Right ventricle myocardium inferior (tissue), 1 donor: ENCODE measurements at regions of chr11 and their contacts with region 1.

Region 1: DNA sequence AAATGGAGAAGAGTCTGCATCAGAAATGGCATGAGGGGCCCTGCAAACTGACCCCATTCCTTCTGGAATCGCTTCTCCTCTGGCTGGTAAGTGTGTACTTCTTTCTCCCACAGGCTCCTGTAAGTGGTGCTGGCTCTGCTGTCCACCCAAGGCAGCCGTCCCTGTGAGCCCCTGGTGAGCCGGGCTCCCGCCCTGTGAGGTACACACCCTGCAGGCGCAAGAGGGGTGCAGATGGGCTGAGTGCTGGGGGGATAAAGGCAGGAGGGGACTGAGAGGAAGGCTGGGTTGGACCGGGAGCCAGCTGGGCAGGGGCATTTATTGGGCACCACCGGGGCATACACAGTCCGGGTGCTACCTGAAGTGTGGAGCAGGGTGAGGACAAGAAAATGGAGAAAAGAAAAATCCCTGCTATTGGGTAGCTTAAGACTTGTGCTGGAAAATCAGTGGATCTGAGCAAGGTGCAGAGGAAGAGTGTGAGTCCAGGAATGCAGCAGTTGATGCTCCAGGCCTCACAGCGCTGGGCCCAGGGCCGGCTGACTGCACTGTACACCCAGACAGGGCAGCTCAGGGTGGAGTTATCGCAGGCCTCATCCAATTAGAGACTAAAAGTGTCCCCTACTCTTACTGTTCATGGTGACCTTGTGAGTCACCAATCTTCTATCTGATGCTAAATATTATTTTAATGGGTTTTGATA is 455.1 kb upstream of the B3GAT1 start:
- DNase-seq: no peak
- ATAC-seq: no peak

Region 2: DNA sequence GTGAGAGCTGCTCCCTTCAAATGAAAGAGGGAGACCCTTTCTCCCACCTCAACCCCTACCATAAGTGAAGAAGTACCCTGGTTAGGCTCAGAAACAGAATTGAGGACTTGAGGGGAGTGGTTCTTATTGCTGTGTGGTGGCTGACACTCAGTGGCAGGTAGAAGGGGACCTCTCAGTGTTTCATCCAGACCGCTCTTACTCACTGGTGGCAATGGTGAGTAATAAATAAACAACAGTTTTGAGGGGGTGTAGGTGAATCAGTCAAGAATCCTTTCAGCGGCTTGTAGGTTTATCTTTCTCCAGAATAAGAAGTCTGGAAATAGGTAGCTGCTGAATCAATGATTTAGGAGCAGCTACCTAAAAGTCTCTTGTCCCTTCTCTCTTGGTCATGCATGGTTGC is 51.7 kb before region 1 on chr11:
- intact Hi-C with region 1: no loop called
- DNase-seq: no peak
- ATAC-seq: no peak

Region 3: GRCh38 chr11:134939905-134940304 is 72.8 kb after region 1 on chr11:
- intact Hi-C with region 1: loop called (anchors 5 kb)
- DNase-seq: no peak
- ATAC-seq: peak; percentile 56